ENCODE measurements at regions of chr16 and their contacts with region 1.

Region 1: GRCh38 chr16:20849587-20850390 is 43.5 kb downstream of the REXO5 start:
- DNase-seq: peak; percentile 40 to 58 (median 56)
- H3K4me3 ChIP-seq: no peak overlapping the region
- H3K4me3 Mint-ChIP-seq: no peak overlapping the region
- H3K27ac ChIP-seq: no peak overlapping the region
- H3K27ac Mint-ChIP-seq: peak overlapping the region in 2 of 7 donors; percentile 35 to 48
- H3K4me1 ChIP-seq: peaks cover 11% of the 10 kb centered on the region
- H3K4me1 Mint-ChIP-seq: peaks cover 9 to 17% (median 11%) of the 10 kb centered on the region in 4 donors
- H3K27me3 ChIP-seq: no peaks in the 10 kb centered on the region
- H3K27me3 Mint-ChIP-seq: no peaks in the 10 kb centered on the region

Region 2: GRCh38 chr16:20598832-20599469 is 250.8 kb before region 1 on chr16:
- CTCF ChIA-PET with region 1: no interaction called
- POLR2A ChIA-PET with region 1: no interaction called
- intact Hi-C with region 1: no loop called
- DNase-seq: no peak
- H3K4me3 ChIP-seq: no peak overlapping the region
- H3K4me3 Mint-ChIP-seq: no peak overlapping the region
- H3K27ac ChIP-seq: no peak overlapping the region
- H3K27ac Mint-ChIP-seq: no peak overlapping the region
- H3K4me1 ChIP-seq: no peaks in the 10 kb centered on the region
- H3K4me1 Mint-ChIP-seq: no peaks in the 10 kb centered on the region
- H3K27me3 ChIP-seq: no peaks in the 10 kb centered on the region
- H3K27me3 Mint-ChIP-seq: peaks cover 2 to 5% of the 10 kb centered on the region in 2 donors

Region 3: DNA sequence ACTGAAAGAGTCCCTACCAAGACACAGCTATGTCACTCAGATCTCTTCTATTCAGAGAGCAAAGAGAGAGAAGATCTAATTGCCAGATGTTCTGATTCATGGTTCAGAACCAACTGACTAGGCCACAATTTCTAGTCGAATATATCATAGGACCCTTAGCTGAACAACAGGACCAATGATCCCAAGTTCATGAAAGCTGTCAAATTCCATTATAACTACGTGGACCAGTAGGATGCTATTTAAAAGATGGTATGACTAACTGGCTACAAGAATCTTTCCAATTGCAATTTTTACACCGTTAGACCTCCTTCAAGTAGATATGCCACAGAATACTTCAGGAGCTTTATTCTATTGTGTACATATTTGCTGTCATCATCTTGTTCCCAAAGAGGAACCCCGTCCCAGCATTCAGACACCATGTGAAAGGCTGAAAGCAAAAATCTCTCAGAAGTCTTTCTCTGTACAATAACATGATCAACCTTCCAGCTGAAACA is 24.3 kb after region 1 on chr16:
- CTCF ChIA-PET with region 1: interaction called, 113 read pairs
- POLR2A ChIA-PET with region 1: interaction called, 7 read pairs
- intact Hi-C with region 1: loop called (anchors 1 kb)
- DNase-seq: no peak
- H3K4me3 ChIP-seq: peak overlapping the region in 1 of 2 donors; percentile 17
- H3K4me3 Mint-ChIP-seq: peak overlapping the region; percentile 61 to 87 (median 77)
- H3K27ac ChIP-seq: peak overlapping the region; percentile 47
- H3K27ac Mint-ChIP-seq: peak overlapping the region; percentile 81 to 96 (median 89)
- H3K4me1 ChIP-seq: peaks cover 39% of the 10 kb centered on the region
- H3K4me1 Mint-ChIP-seq: peaks cover 34 to 52% (median 37%) of the 10 kb centered on the region in 4 donors
- H3K27me3 ChIP-seq: no peaks in the 10 kb centered on the region
- H3K27me3 Mint-ChIP-seq: no peaks in the 10 kb centered on the region

Region 4: GRCh38 chr16:21001262-21001661 is 151.5 kb after region 1 on chr16:
- CTCF ChIA-PET with region 1: interaction called, 4 read pairs
- POLR2A ChIA-PET with region 1: no interaction called
- intact Hi-C with region 1: loop called (anchors 10 kb)
- DNase-seq: no peak
- H3K4me3 ChIP-seq: no peak overlapping the region
- H3K4me3 Mint-ChIP-seq: no peak overlapping the region
- H3K27ac ChIP-seq: no peak overlapping the region
- H3K27ac Mint-ChIP-seq: no peak overlapping the region
- H3K4me1 ChIP-seq: no peaks in the 10 kb centered on the region
- H3K4me1 Mint-ChIP-seq: peaks cover 0 to 2% (median 0%) of the 10 kb centered on the region in 4 donors
- H3K27me3 ChIP-seq: no peaks in the 10 kb centered on the region
- H3K27me3 Mint-ChIP-seq: peaks cover 0 to 15% of the 10 kb centered on the region in 2 donors

Region 5: GRCh38 chr16:21023509-21024202 is 173.9 kb after region 1 on chr16:
- CTCF ChIA-PET with region 1: no interaction called
- POLR2A ChIA-PET with region 1: no interaction called
- intact Hi-C with region 1: no loop called
- DNase-seq: peak in 2 of 5 donors; percentile 1 to 3
- H3K4me3 ChIP-seq: no peak overlapping the region
- H3K4me3 Mint-ChIP-seq: peak overlapping the region in 5 of 8 donors; percentile 4 to 68 (median 35)
- H3K27ac ChIP-seq: no peak overlapping the region
- H3K27ac Mint-ChIP-seq: peak overlapping the region in 3 of 7 donors; percentile 20 to 55 (median 37)
- H3K4me1 ChIP-seq: peaks cover 16% of the 10 kb centered on the region
- H3K4me1 Mint-ChIP-seq: peaks cover 5 to 16% (median 12%) of the 10 kb centered on the region in 4 donors
- H3K27me3 ChIP-seq: no peaks in the 10 kb centered on the region
- H3K27me3 Mint-ChIP-seq: peaks cover 0 to 3% of the 10 kb centered on the region in 2 donors

Region 6: DNA sequence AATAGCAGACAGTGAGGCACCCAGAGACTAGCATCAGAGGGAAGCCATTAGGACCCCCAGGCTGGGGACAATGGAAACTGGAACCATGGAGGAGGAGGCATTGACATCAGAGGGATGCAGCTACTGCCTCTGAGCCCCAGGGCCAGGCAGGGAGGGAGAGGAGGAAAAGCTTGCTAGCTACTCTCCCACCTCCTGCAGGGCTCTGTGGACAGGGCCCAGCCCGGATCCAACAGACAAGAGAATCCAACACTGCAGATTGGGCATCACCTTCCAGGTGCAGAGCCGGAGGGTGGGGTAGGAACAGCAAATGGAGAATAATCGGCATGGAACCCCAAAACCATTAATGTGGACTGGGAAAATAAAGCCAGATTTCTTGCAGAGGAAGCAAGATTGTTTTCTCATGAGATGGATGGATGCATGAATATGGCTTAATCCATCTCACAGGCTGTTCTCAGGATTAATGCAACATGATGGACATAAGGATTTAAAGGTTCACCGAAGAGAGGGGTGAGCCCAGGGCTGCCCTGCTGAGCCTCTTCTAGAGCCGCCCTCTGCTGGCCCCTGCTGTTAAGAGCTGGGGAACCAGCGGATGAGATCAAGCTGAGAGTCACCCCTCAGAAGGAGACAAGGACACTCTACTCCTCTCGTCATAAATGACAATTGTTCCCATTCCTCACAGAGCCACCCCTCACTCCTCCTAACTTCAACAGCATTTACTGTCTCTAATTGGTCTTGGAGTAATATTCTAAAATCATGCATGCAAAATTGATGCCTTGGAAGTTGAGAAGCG is 252.0 kb after region 1 on chr16:
- CTCF ChIA-PET with region 1: interaction called, 8 read pairs
- POLR2A ChIA-PET with region 1: no interaction called
- intact Hi-C with region 1: loop called (anchors 1 kb)
- DNase-seq: peak in 1 of 5 donors; percentile 6
- H3K4me3 ChIP-seq: no peak overlapping the region
- H3K4me3 Mint-ChIP-seq: no peak overlapping the region
- H3K27ac ChIP-seq: no peak overlapping the region
- H3K27ac Mint-ChIP-seq: no peak overlapping the region
- H3K4me1 ChIP-seq: no peaks in the 10 kb centered on the region
- H3K4me1 Mint-ChIP-seq: peaks cover 0 to 1% (median 0%) of the 10 kb centered on the region in 4 donors
- H3K27me3 ChIP-seq: no peaks in the 10 kb centered on the region
- H3K27me3 Mint-ChIP-seq: peaks cover 18 to 24% of the 10 kb centered on the region in 2 donors

Region 7: GRCh38 chr16:21277927-21278706 is 428.3 kb after region 1 on chr16 and contains the start of gene CRYM:
- CTCF ChIA-PET with region 1: interaction called, 3 read pairs
- POLR2A ChIA-PET with region 1: no interaction called
- intact Hi-C with region 1: loop called (anchors 2 kb)
- DNase-seq: peak in 3 of 5 donors; percentile 22 to 49 (median 31)
- H3K4me3 ChIP-seq: no peak within 1 kb of the TSS
- H3K4me3 Mint-ChIP-seq: peak within 1 kb of the TSS in 6 of 8 donors; percentile 5 to 59 (median 26)
- H3K27ac ChIP-seq: no peak within 1 kb of the TSS
- H3K27ac Mint-ChIP-seq: no peak within 1 kb of the TSS
- H3K4me1 ChIP-seq: no peaks in the 10 kb centered on the region
- H3K4me1 Mint-ChIP-seq: no peaks in the 10 kb centered on the region
- H3K27me3 ChIP-seq: peaks cover 27% of the 10 kb centered on the region
- H3K27me3 Mint-ChIP-seq: peaks cover 49 to 54% of the 10 kb centered on the region in 2 donors
- total RNA-seq, gene CRYM: not detected

Measured in CD4-positive, alpha-beta memory T cell (primary cell).